Calu3 (cell line): ENCODE measurements at regions of chr18 and their contacts with region 1.

Region 1: DNA sequence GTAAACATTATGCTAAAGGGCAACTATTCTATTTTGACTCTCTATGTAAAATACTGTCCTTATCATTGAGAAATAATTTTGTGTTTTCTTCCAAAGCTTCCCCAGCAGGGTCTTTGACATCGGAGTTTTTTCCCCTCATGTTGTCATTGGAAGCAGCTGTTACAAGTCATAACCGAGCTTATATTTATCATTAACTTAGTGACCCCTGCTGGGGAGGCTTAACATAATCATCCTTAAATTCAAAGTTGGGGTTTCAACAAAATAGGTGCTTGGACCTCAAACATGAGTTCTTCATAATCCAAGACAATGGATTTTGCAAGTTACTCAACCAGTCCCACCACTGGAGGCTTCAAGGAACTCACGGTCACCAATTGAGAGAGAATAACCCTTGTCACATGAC is 330.9 kb downstream of the DCC start:
- DNase-seq: peak; percentile 2
- H3K4me3 Mint-ChIP-seq: no peak overlapping the region
- H3K27ac Mint-ChIP-seq: no peak overlapping the region
- H3K4me1 Mint-ChIP-seq: no peaks in the 10 kb centered on the region
- H3K27me3 Mint-ChIP-seq: peaks cover 29% of the 10 kb centered on the region
- CTCF ChIP-seq: no peak

Region 2: GRCh38 chr18:51110073-51110803 is 1560.7 kb before region 1 on chr18:
- CTCF ChIA-PET with region 1: no interaction called
- intact Hi-C with region 1: loop called (anchors 10 kb)
- DNase-seq: peak; percentile 85
- H3K4me3 Mint-ChIP-seq: no peak overlapping the region
- H3K27ac Mint-ChIP-seq: no peak overlapping the region
- H3K4me1 Mint-ChIP-seq: peaks cover 16% of the 10 kb centered on the region
- H3K27me3 Mint-ChIP-seq: no peaks in the 10 kb centered on the region
- CTCF ChIP-seq: peak; percentile 98

Region 3: DNA sequence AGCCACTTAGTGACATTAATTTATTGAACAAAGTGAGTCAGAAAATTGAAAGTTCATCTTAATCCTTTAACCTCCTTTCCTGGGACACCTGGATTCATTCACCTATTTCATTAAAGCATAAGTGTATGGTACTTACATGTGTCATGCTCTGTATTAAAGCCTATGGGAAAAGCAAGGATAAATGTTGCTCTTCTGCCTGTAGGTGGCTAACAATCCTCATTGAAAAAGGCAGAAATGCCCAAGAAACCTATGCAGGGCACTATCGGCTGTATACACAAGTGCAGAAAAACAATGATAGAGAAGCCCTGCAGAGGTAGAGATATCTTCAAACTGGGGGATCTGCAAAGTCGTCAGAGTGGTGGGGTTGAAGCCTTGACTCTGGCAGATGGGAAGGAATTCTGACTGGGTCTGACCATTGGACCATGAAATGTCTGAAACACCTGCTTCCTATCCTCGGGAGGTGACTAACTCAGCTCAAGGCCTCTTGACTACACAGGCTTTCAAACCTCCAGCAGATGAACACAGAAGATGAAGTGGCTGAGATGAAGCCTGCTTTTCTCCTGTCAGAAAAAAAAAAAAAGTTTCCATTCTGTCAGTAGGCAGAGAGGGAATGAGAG is 247.8 kb before region 1 on chr18:
- CTCF ChIA-PET with region 1: no interaction called
- intact Hi-C with region 1: loop called (anchors 10 kb)
- DNase-seq: no peak
- H3K4me3 Mint-ChIP-seq: no peak overlapping the region
- H3K27ac Mint-ChIP-seq: no peak overlapping the region
- H3K4me1 Mint-ChIP-seq: no peaks in the 10 kb centered on the region
- H3K27me3 Mint-ChIP-seq: peaks cover 43% of the 10 kb centered on the region
- CTCF ChIP-seq: no peak

Region 4: DNA sequence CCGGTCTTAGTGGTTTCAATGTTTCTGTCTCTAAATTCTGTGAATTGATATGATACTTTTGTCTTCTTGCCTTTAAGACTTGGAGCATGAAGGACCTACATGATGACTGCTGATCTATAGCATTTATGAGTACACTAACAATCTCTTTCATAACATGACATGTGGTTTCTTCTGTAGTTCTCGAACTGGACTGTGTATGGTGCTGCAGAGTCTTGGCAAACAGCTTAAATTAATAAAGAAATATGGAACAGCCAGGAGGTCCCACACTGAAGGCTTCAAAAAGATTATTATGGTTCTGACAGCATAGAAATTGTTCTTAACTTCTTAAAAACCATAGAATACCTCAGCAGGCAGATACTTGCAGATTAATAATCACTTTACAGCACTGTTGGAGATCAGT is 185.9 kb before region 1 on chr18:
- CTCF ChIA-PET with region 1: interaction called, 4 read pairs
- intact Hi-C with region 1: loop called (anchors 10 kb)
- DNase-seq: no peak
- H3K4me3 Mint-ChIP-seq: no peak overlapping the region
- H3K27ac Mint-ChIP-seq: no peak overlapping the region
- H3K4me1 Mint-ChIP-seq: no peaks in the 10 kb centered on the region
- H3K27me3 Mint-ChIP-seq: peaks cover 49% of the 10 kb centered on the region
- CTCF ChIP-seq: no peak